Kidney (tissue), 22 donors: ENCODE measurements at regions of chr16 and their contacts with region 1.

Region 1: GRCh38 chr16:47141773-47142485 is 1.8 kb downstream of the NETO2 start:
- DNase-seq: peak; percentile 86 to 95 (median 90)
- H3K4me3 ChIP-seq: peak overlapping the region; percentile 66 to 86 (median 72)
- H3K27ac ChIP-seq: no peak overlapping the region
- H3K4me1 ChIP-seq: peaks cover 0 to 8% (median 5%) of the 10 kb centered on the region in 3 donors
- H3K27me3 ChIP-seq: no peaks in the 10 kb centered on the region
- CTCF ChIP-seq: peak; percentile 92

Region 2: GRCh38 chr16:47320546-47321310 is 178.8 kb after region 1 on chr16:
- intact Hi-C with region 1: no loop called
- DNase-seq: peak in 1 of 5 donors; percentile 4
- H3K4me3 ChIP-seq: no peak overlapping the region
- H3K27ac ChIP-seq: no peak overlapping the region
- H3K4me1 ChIP-seq: no peaks in the 10 kb centered on the region
- H3K27me3 ChIP-seq: no peaks in the 10 kb centered on the region
- CTCF ChIP-seq: no peak

Region 3: DNA sequence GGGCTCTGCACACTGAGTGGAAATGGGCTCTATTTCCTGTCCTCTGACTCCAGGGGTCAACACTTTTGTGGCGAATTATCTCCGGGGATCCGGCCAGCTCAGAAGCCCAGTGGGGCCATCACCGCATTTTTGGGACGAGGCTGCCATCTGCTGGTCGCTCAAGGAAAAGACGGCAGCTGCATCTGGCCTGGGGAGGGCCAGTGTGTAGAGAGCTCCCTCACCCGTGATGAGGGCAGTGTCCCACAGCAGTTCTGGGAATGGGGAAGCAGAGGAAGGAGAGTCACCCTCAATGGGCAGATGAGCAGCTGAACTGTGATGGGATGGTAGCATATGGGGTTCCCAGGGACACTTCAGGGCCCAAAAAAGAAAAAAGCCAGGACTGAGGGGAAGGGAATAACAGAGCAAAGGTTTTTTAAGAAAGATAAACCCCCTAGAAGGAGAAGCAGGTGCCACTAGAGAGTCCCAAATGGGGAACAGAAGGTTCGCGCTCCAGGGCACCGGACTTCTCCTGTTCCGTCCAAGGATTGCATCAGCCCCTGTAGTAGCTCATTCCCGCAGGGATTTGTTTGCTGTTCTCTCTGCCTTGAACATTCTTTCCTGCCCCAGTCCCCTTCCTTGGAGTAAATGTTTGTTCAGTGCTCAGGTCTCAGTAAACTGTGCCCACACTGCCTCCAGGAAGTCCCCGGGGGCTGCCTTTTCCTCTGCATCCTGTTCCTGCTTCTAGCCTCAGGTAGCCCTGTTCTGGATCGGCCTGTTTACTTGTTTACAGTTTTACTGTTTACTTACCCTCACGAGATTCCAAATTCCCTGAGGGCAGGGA is 1023.2 kb after region 1 on chr16:
- intact Hi-C with region 1: loop called (anchors 5 kb)
- DNase-seq: peak; percentile 58 to 83 (median 72)
- H3K4me3 ChIP-seq: no peak overlapping the region
- H3K27ac ChIP-seq: no peak overlapping the region
- H3K4me1 ChIP-seq: no peaks in the 10 kb centered on the region
- H3K27me3 ChIP-seq: no peaks in the 10 kb centered on the region
- CTCF ChIP-seq: peak; percentile 81